Common myeloid progenitor, CD34-positive (primary cell): ENCODE measurements at regions of chr13 and their contacts with region 1.

Region 1: DNA sequence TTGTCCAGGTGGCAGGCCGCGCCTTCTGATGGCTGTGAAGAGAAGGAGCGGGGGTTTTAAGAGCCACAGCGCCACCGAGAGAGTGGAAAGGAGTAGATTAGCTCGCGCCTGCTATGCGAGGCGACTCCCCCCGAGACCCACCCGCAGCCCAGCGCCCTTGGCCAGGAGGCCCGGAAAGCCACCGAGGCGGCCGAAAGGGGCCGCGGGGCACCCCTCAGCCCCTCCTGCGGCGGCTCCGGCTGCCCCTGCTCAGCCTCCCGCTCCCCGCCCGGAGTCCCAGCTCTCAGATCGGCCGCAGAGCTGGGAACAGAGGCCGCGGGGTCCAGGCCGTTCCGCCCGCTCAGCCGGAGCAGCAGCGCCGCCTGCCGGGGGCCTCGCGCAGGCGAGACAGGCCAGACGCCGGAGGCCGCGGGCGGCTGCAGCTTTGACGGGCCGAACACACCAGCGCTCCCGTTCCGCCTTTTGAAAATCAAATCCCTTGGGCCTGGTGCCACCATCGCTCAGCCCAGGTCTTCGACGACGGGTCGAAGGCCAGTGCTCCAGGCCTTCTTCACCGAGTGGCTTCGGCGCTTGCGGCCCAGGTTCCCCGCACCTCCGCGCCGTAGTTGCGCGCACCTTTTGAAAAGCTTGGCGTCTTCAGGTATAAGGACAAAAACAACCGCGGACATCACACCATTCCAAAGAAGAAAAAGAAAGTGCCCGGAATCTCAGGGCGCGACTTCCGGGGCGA is 15.3 kb downstream of the CDX2 start:
- DNase-seq: peak; percentile 68 to 83 (median 81)
- H3K4me3 ChIP-seq: peak overlapping the region; percentile 19 to 58 (median 47)
- H3K27ac ChIP-seq: no peak overlapping the region
- H3K4me1 ChIP-seq: peaks cover 0 to 20% (median 19%) of the 10 kb centered on the region in 4 experiments
- H3K27me3 ChIP-seq: peaks cover 14 to 97% (median 55%) of the 10 kb centered on the region in 5 experiments

Region 2: DNA sequence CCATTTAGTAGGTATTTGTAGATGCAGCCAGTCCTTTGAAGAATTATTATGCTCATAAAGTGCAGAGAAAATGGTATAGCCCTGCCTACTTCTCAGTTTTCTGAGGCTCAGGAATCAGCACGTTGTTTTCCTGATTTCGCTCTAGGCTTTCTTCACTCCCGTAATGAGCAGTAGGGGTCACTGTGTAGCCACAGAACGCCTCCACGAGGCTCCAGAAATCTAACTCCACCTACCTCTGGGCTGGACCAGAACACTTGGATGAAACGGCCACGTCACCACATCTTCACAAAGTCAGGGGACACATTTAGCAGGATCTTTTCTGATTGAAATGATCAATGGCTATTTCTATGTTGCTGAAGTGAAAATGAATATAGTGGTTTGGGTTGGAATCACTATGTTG is 579.2 kb before region 1 on chr13:
- CTCF ChIA-PET with region 1: interaction called, 16 read pairs
- POLR2A ChIA-PET with region 1: no interaction called
- DNase-seq: peak; percentile 83 to 89 (median 85)
- H3K4me3 ChIP-seq: no peak overlapping the region
- H3K27ac ChIP-seq: no peak overlapping the region
- H3K4me1 ChIP-seq: peaks cover 0 to 1% (median 0%) of the 10 kb centered on the region in 4 experiments
- H3K27me3 ChIP-seq: peaks cover 0 to 15% (median 11%) of the 10 kb centered on the region in 5 experiments

Region 3: GRCh38 chr13:27919934-27920676 is 33.7 kb before region 1 on chr13 and contains the start of gene PDX1:
- CTCF ChIA-PET with region 1: interaction called, 17 read pairs
- POLR2A ChIA-PET with region 1: no interaction called
- DNase-seq: peak in 1 of 3 donors; percentile 6
- H3K4me3 ChIP-seq: peak within 1 kb of the TSS in 6 of 7 experiments; percentile 31 to 74 (median 58)
- H3K27ac ChIP-seq: no peak within 1 kb of the TSS
- H3K4me1 ChIP-seq: peaks cover 0 to 38% (median 28%) of the 10 kb centered on the region in 4 experiments
- H3K27me3 ChIP-seq: peaks cover 26 to 100% (median 80%) of the 10 kb centered on the region in 5 experiments

Region 4: GRCh38 chr13:27968316-27969081 is 14.7 kb after region 1 on chr13:
- CTCF ChIA-PET with region 1: interaction called, 26 read pairs
- POLR2A ChIA-PET with region 1: interaction called, 4 read pairs
- DNase-seq: peak in 2 of 3 donors; percentile 60 to 68
- H3K4me3 ChIP-seq: peak overlapping the region in 5 of 7 experiments; percentile 7 to 62 (median 54)
- H3K27ac ChIP-seq: no peak overlapping the region
- H3K4me1 ChIP-seq: peaks cover 0 to 37% (median 27%) of the 10 kb centered on the region in 4 experiments
- H3K27me3 ChIP-seq: peaks cover 10 to 100% (median 66%) of the 10 kb centered on the region in 5 experiments